MCF 10A (cell line): ENCODE measurements at regions of chr1 and their contacts with region 1.

Region 1: DNA sequence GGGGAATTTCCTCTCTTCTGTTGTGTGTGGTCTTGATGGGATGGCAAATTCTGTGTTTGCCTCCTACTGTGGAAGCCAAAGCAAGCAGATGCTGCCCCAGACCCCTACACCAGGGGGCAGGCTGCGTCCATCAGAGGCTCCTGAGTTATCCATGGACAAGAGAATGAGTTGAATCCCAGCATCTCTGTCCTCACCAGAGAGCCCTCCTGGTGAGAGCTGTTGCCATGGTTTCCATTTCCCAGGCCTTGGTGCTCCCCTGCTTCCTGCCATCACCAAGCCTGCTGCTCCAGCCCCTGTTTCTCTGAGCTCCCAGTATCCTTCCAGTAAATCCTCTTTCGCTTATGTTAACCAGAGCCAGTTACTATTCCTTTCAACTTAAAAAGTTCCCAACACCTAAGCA is 20.4 kb upstream of the GNG12 start:
- DNase-seq: peak; percentile 71
- H3K4me3 Mint-ChIP-seq: no peak overlapping the region
- H3K27ac Mint-ChIP-seq: no peak overlapping the region
- H3K4me1 Mint-ChIP-seq: peaks cover 16% of the 10 kb centered on the region
- H3K27me3 Mint-ChIP-seq: no peaks in the 10 kb centered on the region
- CTCF ChIP-seq: peak; percentile 92

Region 2: DNA sequence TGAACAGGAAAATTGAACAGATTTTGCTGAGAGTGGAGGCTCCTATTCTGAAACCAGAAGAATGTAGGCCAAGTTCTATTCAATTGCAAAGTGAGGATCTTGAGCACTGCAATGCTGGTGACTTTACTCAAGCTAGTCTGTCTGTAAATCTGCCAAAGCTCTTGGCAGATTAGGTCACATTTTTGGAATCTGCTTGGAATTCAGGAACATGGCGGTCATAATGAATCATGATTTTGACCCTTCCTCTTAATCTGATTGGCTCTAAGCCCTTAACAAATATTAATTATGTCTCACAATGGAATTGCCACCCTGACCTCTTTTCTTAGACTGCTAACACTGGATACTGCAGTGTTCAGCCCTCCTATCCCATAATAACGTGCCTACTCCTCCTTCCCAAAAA is 13.3 kb before region 1 on chr1:
- CTCF ChIA-PET with region 1: interaction called, 37 read pairs
- POLR2A ChIA-PET with region 1: interaction called, 4 read pairs
- intact Hi-C with region 1: no loop called
- DNase-seq: peak; percentile 31
- H3K4me3 Mint-ChIP-seq: no peak overlapping the region
- H3K27ac Mint-ChIP-seq: peak overlapping the region; percentile 17
- H3K4me1 Mint-ChIP-seq: peaks cover 37% of the 10 kb centered on the region
- H3K27me3 Mint-ChIP-seq: no peaks in the 10 kb centered on the region
- CTCF ChIP-seq: no peak

Region 3: DNA sequence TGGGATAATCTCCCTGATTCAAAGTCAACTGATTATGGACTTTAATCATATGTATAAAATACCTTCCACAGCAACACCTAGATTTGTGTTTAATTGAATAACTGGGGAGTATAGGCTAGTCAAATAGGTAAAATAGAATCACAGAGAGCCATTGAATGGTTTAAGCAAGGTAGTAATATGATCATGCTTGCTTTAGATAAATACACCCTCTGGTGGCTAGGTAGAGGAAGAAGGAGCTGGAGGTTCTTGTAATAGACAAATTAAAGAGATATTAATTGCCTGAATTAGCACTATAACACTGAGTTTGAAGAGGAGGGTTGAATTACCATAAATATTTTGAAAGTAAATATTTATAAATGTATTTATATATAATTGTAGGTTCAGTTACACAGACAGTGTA is 156.4 kb after region 1 on chr1:
- CTCF ChIA-PET with region 1: interaction called, 121 read pairs
- POLR2A ChIA-PET with region 1: no interaction called
- intact Hi-C with region 1: loop called (anchors 1 kb)
- DNase-seq: peak; percentile 40
- H3K4me3 Mint-ChIP-seq: no peak overlapping the region
- H3K27ac Mint-ChIP-seq: no peak overlapping the region
- H3K4me1 Mint-ChIP-seq: no peaks in the 10 kb centered on the region
- H3K27me3 Mint-ChIP-seq: no peaks in the 10 kb centered on the region
- CTCF ChIP-seq: peak; percentile 34

Region 4: DNA sequence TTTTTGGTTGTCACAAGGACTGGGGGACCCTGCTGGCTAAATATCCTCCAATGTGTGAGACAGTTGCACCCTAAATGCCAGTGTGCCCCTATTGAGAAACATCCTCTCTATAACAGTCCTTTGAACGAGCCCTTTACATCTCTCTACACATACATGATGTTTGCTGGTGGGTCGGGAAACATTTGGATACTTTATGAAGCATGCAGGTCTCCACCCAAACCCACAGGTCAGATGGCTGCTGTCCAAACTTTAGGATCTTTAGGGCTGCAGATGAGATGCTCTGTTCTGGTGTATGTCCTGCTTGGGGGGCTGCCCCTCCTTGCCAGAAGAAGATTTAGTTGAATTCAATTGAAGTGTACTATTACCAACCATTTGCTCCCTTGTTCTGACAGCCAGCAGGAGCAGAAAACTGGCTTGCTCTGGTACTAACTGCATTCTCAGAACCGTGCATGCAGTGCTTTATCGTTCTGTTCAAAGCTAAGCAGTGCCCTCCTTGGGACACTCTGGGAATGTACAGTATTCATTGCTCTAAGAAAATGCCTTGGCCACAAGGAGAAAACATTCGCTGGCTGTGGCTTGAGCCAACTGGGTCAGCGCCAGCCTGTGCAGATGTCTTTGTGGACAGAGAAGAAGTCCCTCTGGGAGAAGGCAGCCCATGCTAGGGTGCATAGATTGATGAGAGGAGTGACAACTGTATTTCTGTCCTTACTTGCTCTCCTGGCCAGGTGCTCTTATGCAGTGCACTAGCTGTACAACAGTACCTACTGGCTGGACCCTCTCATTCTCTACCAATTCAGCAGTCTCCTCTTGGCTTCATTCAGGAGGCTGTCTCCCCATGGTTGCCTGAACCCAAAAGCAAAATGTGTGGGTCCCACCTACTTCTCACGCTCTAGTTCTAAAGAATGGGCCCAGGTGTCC is 258.1 kb after region 1 on chr1:
- CTCF ChIA-PET with region 1: interaction called, 74 read pairs
- POLR2A ChIA-PET with region 1: interaction called, 5 read pairs
- intact Hi-C with region 1: loop called (anchors 1 kb)
- DNase-seq: peak; percentile 79
- H3K4me3 Mint-ChIP-seq: no peak overlapping the region
- H3K27ac Mint-ChIP-seq: no peak overlapping the region
- H3K4me1 Mint-ChIP-seq: peaks cover 19% of the 10 kb centered on the region
- H3K27me3 Mint-ChIP-seq: no peaks in the 10 kb centered on the region
- CTCF ChIP-seq: peak; percentile 65

Region 5: DNA sequence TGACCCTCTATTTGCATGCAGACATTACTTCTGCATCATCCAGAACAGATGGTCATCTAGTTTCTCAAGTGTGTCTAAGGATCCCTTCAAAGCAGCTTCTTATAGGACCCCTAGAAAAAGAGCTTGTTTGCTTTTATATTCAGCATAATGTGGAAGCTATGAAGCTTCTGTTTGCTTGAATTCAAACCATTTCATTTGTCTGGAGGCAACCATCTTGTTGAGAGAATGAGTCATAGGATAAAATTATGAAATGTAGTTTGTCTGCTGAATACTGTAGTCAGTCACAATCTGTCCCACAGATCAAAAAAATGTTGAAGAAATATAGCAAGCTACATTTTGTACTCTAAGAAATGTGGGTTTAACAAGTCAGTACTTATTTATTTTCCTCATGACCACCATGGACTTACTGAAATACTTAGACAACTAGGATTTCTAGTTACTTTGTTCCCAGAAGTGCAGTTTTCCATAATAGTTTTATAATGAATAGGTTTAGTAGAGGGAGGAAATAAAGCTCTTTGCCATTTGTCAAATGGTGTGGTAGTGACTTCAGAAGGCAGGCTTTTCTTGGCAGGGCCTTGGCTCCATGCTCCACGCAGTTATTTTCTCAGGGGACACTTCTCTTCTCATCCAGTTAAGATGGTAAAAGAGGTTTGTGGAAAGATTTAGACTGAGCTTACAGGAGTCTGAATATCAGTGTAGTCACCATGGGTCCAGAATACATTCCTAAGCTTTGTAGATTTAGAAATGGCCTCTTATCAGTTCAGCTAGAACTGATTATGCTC is 717.9 kb after region 1 on chr1:
- CTCF ChIA-PET with region 1: no interaction called
- POLR2A ChIA-PET with region 1: no interaction called
- intact Hi-C with region 1: loop called (anchors 5 kb)
- DNase-seq: peak; percentile 30
- H3K4me3 Mint-ChIP-seq: no peak overlapping the region
- H3K27ac Mint-ChIP-seq: no peak overlapping the region
- H3K4me1 Mint-ChIP-seq: no peaks in the 10 kb centered on the region
- H3K27me3 Mint-ChIP-seq: peaks cover 65% of the 10 kb centered on the region
- CTCF ChIP-seq: no peak